Activated CD4-positive, alpha-beta memory T cell treated with anti-CD3 and anti-CD28 coated beads, Interleukin-2, amount 10 ng/mL, durations not matched to agents 7 days and 5 days (primary cell): ENCODE measurements at regions of chr18 and their contacts with region 1.

Region 1: GRCh38 chr18:48813833-48814489 is 136.8 kb downstream of the SMAD7 start:
- DNase-seq: peak; percentile 64
- H3K4me3 Mint-ChIP-seq: peak overlapping the region; percentile 37
- H3K27ac Mint-ChIP-seq: peak overlapping the region; percentile 90
- H3K4me1 Mint-ChIP-seq: peaks cover 63% of the 10 kb centered on the region
- H3K27me3 Mint-ChIP-seq: no peaks in the 10 kb centered on the region

Region 2: GRCh38 chr18:48792611-48793380 is 21.2 kb before region 1 on chr18:
- CTCF ChIA-PET with region 1: interaction called, 4 read pairs
- POLR2A ChIA-PET with region 1: interaction called, 11 read pairs
- DNase-seq: no peak
- H3K4me3 Mint-ChIP-seq: no peak overlapping the region
- H3K27ac Mint-ChIP-seq: no peak overlapping the region
- H3K4me1 Mint-ChIP-seq: peaks cover 6% of the 10 kb centered on the region
- H3K27me3 Mint-ChIP-seq: peaks cover 5% of the 10 kb centered on the region

Region 3: DNA sequence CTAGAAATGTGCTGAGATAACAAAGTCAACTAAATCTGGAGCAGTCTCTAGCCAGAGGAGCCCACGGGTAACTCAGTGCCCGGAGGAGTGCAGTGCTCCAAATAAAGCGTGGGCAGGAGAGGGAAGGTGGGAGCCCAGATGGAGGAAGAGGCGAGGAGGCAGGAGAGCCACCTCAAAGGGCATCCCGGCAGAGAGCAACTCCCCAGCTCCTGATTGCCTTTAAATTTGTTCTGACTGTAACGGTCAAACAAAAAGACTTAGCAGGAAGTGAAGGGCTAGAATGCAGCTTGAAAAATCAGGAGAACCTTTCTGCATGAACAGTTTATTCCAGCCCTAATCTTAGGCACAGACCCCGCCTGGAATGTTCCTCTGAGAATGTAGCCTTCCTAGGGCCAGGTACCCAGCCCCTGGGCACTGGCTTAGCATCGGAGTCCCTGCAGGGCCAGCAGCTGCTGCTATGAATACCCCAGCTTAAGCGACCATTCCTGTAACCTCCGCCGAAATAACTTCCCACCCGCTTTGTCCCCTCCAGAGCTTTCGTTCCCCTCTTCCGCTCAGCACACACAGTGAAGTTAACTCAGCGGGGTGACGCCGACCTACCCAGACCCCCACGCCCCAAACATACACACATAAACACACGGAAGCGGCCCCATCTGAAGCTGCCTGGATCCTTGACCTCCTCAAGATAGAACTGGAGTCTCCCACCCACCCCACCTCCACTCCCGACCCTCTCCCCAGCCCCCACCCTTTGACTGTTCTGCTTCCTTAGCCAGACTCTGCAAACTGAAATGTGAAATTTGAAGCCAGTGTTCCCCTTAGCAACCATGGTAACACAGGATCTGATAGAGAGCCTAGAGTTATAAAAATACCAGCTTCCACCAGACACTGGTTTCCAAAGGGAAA is 13.6 kb after region 1 on chr18:
- CTCF ChIA-PET with region 1: no interaction called
- POLR2A ChIA-PET with region 1: interaction called, 75 read pairs
- DNase-seq: no peak
- H3K4me3 Mint-ChIP-seq: no peak overlapping the region
- H3K27ac Mint-ChIP-seq: no peak overlapping the region
- H3K4me1 Mint-ChIP-seq: peaks cover 37% of the 10 kb centered on the region
- H3K27me3 Mint-ChIP-seq: no peaks in the 10 kb centered on the region

Region 4: GRCh38 chr18:48834413-48835031 is 20.6 kb after region 1 on chr18:
- CTCF ChIA-PET with region 1: interaction called, 11 read pairs
- POLR2A ChIA-PET with region 1: interaction called, 75 read pairs
- DNase-seq: peak; percentile 86
- H3K4me3 Mint-ChIP-seq: peak overlapping the region; percentile 81
- H3K27ac Mint-ChIP-seq: peak overlapping the region; percentile 97
- H3K4me1 Mint-ChIP-seq: peaks cover 93% of the 10 kb centered on the region
- H3K27me3 Mint-ChIP-seq: no peaks in the 10 kb centered on the region

Region 5: GRCh38 chr18:48842259-48843061 is 28.5 kb after region 1 on chr18:
- CTCF ChIA-PET with region 1: no interaction called
- POLR2A ChIA-PET with region 1: interaction called, 11 read pairs
- DNase-seq: peak; percentile 68
- H3K4me3 Mint-ChIP-seq: peak overlapping the region; percentile 31
- H3K27ac Mint-ChIP-seq: peak overlapping the region; percentile 81
- H3K4me1 Mint-ChIP-seq: peaks cover 63% of the 10 kb centered on the region
- H3K27me3 Mint-ChIP-seq: peaks cover 4% of the 10 kb centered on the region

Region 6: DNA sequence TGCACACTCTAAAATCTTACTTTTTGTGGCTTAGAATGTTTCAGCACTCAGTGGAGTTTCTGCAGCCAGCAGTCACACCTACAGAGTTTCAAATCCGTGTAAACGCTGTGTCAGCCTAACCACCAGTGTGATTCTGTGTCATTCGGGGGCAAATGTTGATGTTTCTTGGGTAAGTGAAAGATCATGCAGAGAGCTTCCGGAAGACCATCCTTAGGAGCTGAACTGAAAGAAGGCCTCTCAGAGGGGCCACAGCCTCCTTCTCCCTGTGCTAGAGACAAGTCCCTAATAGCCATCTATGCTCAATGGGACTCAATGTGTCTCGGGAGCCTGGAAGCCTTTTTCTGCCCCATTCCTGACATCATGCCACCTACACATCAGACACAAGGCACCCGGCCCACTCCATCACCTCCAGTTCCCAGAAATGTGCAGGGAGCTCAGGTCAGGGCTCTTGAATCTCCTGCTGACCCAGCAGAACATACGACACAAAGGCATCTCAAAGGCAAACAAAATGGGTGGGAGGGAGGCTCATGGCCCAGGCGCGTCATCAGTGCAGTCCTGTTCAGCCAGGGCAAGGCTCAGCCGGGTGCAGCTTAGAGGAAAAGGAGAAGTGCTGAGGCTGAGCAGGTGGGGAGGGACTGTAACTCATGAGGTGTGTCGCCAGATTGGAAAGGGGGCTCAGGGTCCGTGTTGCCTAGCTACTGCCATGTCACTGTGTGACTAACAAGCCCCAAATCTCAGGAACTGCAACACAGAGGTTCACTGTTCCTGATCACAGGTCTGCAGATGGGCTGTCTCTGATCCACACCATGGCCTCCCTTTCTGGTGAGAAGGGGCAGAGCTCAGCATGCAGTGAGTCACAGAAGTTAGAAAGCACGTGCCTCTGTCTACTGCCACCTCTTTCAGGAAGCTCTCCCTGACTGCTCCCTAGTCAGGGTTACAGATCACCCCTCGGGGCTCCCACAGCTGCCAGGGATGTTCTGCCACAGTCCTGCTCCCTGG is 54.8 kb after region 1 on chr18:
- CTCF ChIA-PET with region 1: no interaction called
- POLR2A ChIA-PET with region 1: interaction called, 18 read pairs
- DNase-seq: peak; percentile 76
- H3K4me3 Mint-ChIP-seq: peak overlapping the region; percentile 16
- H3K27ac Mint-ChIP-seq: peak overlapping the region; percentile 99
- H3K4me1 Mint-ChIP-seq: peaks cover 41% of the 10 kb centered on the region
- H3K27me3 Mint-ChIP-seq: no peaks in the 10 kb centered on the region

Region 7: DNA sequence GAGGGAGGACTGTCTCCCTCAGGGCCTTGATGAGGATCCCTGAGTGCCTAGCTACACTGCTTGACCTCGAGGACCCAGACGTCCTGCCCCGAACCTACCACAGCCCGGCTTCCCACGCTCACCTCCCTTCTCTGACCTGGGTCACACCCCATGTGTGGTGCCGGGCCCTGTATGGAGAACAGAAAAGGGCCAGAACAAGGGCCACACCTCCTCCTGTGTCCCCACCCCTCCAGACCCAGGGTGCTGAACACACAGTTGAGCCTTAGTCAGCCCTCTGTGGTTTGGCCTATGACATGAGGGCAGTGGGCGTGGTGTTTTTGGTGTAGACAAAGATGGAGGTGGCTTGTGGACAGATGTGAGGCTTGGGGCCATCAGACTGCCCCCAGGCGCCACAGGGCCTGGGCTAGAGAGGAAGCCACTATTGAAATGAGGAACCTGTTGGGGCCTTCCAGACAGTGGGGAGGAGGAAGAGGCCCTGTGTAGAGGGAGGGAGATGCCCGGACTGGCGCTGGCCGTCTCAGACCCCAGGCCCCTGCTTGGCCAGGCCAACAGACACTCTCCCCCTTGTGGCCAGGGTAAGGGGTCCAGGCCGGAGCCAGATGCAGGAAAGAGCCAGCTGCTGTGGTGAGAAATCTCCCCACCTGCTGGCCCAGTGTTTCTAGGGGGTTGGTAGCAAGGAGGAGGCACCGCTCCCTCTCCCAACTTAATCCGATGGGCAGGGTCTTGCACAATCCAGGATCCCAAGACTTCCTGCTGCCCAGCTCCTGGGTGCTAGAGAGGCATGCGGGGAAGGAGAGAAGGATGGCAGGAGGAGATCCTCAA is 82.9 kb after region 1 on chr18:
- CTCF ChIA-PET with region 1: no interaction called
- POLR2A ChIA-PET with region 1: no interaction called
- DNase-seq: peak; percentile 27
- H3K4me3 Mint-ChIP-seq: no peak overlapping the region
- H3K27ac Mint-ChIP-seq: no peak overlapping the region
- H3K4me1 Mint-ChIP-seq: peaks cover 15% of the 10 kb centered on the region
- H3K27me3 Mint-ChIP-seq: no peaks in the 10 kb centered on the region

Region 8: GRCh38 chr18:48917579-48918517 is 103.9 kb after region 1 on chr18:
- CTCF ChIA-PET with region 1: no interaction called
- POLR2A ChIA-PET with region 1: no interaction called
- DNase-seq: no peak
- H3K4me3 Mint-ChIP-seq: no peak overlapping the region
- H3K27ac Mint-ChIP-seq: no peak overlapping the region
- H3K4me1 Mint-ChIP-seq: peaks cover 53% of the 10 kb centered on the region
- H3K27me3 Mint-ChIP-seq: no peaks in the 10 kb centered on the region

Region 9: GRCh38 chr18:48951448-48952286 is 137.7 kb after region 1 on chr18:
- CTCF ChIA-PET with region 1: interaction called, 3 read pairs
- POLR2A ChIA-PET with region 1: interaction called, 10 read pairs
- DNase-seq: peak; percentile 83
- H3K4me3 Mint-ChIP-seq: peak overlapping the region; percentile 81
- H3K27ac Mint-ChIP-seq: peak overlapping the region; percentile 76
- H3K4me1 Mint-ChIP-seq: peaks cover 47% of the 10 kb centered on the region
- H3K27me3 Mint-ChIP-seq: no peaks in the 10 kb centered on the region